HCT116 (cell line): ENCODE measurements at regions of chr17 and their contacts with region 1.

Region 1: GRCh38 chr17:64491034-64491859 is 5.6 kb downstream of the POLG2 start:
- DNase-seq: no peak
- ATAC-seq: peak; percentile 93
- H3K4me3 ChIP-seq: no peak overlapping the region
- H3K27ac ChIP-seq: no peak overlapping the region
- H3K4me1 ChIP-seq: peaks cover 4 to 8% of the 10 kb centered on the region in 2 experiments; a peak in 2 of 4 replicates
- H3K27me3 ChIP-seq: no peaks in the 10 kb centered on the region
- CTCF ChIP-seq: peak; percentile 75 to 87 (median 78); a peak in 5 of 6 replicates
- POLR2A ChIP-seq: no peak
- RAD21 ChIP-seq: peak; percentile 88

Region 2: GRCh38 chr17:64320613-64321553 is 170.4 kb before region 1 on chr17:
- CTCF ChIA-PET with region 1: interaction called, 3 read pairs
- POLR2A ChIA-PET with region 1: no interaction called
- RAD21 ChIA-PET with region 1: no interaction called
- intact Hi-C with region 1: loop called (anchors 5 kb)
- DNase-seq: peak; percentile 90
- ATAC-seq: peak; percentile 84
- H3K4me3 ChIP-seq: peak overlapping the region; percentile 22 to 26; a peak in 3 of 4 replicates
- H3K27ac ChIP-seq: no peak overlapping the region
- H3K4me1 ChIP-seq: peaks cover 0 to 5% of the 10 kb centered on the region in 2 experiments; a peak in 1 of 4 replicates
- H3K27me3 ChIP-seq: no peaks in the 10 kb centered on the region
- CTCF ChIP-seq: peak; percentile 83 to 96 (median 94)
- POLR2A ChIP-seq: no peak
- RAD21 ChIP-seq: peak; percentile 96

Region 3: DNA sequence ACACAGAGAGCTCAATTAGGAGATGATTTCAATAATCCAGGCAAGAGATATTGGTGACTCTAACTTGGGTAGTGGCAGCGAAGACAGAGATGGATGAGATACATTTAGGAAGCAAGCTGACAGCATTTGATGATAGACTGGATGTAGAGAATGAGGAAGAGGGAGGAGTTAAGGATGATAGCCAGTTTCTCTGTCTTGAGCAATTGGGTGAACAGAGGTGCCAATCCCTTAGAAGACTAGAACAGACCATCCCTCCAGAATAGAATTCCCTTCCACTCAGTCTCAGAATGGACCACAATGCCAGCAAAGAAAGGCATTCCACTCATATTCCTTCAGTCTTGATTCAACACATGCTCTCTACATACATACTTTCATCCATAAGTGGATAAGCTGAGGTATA is 11.6 kb before region 1 on chr17:
- CTCF ChIA-PET with region 1: interaction called, 10 read pairs
- POLR2A ChIA-PET with region 1: interaction called, 7 read pairs
- RAD21 ChIA-PET with region 1: no interaction called
- intact Hi-C with region 1: no loop called
- DNase-seq: no peak
- ATAC-seq: no peak
- H3K4me3 ChIP-seq: no peak overlapping the region
- H3K27ac ChIP-seq: no peak overlapping the region
- H3K4me1 ChIP-seq: no peaks in the 10 kb centered on the region
- H3K27me3 ChIP-seq: no peaks in the 10 kb centered on the region
- CTCF ChIP-seq: no peak
- POLR2A ChIP-seq: no peak
- RAD21 ChIP-seq: no peak

Region 4: GRCh38 chr17:64506576-64507477 is 15.6 kb after region 1 on chr17 and contains the start of gene CEP95:
- CTCF ChIA-PET with region 1: interaction called, 14 read pairs
- POLR2A ChIA-PET with region 1: interaction called, 119 read pairs
- RAD21 ChIA-PET with region 1: no interaction called
- intact Hi-C with region 1: no loop called
- DNase-seq: peak; percentile 98
- ATAC-seq: peak; percentile 66
- H3K4me3 ChIP-seq: peak within 1 kb of the TSS; percentile 93 to 95
- H3K27ac ChIP-seq: peak within 1 kb of the TSS; percentile 90
- H3K4me1 ChIP-seq: peaks cover 12 to 28% of the 10 kb centered on the region in 2 experiments
- H3K27me3 ChIP-seq: no peaks in the 10 kb centered on the region
- CTCF ChIP-seq: no peak
- POLR2A ChIP-seq: peak; percentile 43
- RAD21 ChIP-seq: no peak
- total RNA-seq, gene CEP95: 77.0 TPM

Region 5: GRCh38 chr17:64544742-64545141 is 53.5 kb after region 1 on chr17:
- CTCF ChIA-PET with region 1: no interaction called
- POLR2A ChIA-PET with region 1: no interaction called
- RAD21 ChIA-PET with region 1: no interaction called
- intact Hi-C with region 1: no loop called
- DNase-seq: no peak
- ATAC-seq: no peak
- H3K4me3 ChIP-seq: no peak overlapping the region
- H3K27ac ChIP-seq: no peak overlapping the region
- H3K4me1 ChIP-seq: no peaks in the 10 kb centered on the region
- H3K27me3 ChIP-seq: no peaks in the 10 kb centered on the region
- CTCF ChIP-seq: no peak
- POLR2A ChIP-seq: no peak
- RAD21 ChIP-seq: no peak

Region 6: DNA sequence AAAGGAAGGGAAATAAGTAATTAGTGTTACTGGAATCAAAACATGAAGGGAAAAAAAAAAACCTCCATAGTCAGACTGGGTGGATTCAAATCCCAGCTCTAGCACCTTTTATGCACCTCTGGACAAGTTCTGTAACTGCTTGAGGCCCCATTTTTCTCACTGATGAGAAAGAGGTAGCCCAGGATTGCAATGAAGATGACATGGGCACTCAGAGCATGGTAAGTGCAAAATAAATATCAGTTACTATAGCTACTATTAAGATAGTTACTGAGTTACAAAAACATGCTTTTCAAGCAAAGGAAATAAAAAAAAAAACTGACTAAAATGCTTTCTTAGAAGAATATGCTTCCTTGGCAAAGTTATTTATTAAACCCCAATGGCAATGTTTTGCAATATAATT is 74.3 kb after region 1 on chr17:
- CTCF ChIA-PET with region 1: no interaction called
- POLR2A ChIA-PET with region 1: no interaction called
- RAD21 ChIA-PET with region 1: no interaction called
- intact Hi-C with region 1: no loop called
- DNase-seq: no peak
- ATAC-seq: no peak
- H3K4me3 ChIP-seq: no peak overlapping the region
- H3K27ac ChIP-seq: no peak overlapping the region
- H3K4me1 ChIP-seq: no peaks in the 10 kb centered on the region
- H3K27me3 ChIP-seq: no peaks in the 10 kb centered on the region
- CTCF ChIP-seq: no peak
- POLR2A ChIP-seq: no peak
- RAD21 ChIP-seq: no peak